Heart left ventricle (tissue), 16 donors: ENCODE measurements at regions of chr11 and their contacts with region 1.

Region 1: GRCh38 chr11:44434191-44434590 is 124.3 kb upstream of the ALX4 start:
- DNase-seq: no peak
- ATAC-seq: no peak
- H3K4me3 ChIP-seq: no peak overlapping the region
- H3K27ac ChIP-seq: no peak overlapping the region
- H3K4me1 ChIP-seq: peaks cover 0 to 19% (median 4%) of the 10 kb centered on the region in 12 donors
- H3K27me3 ChIP-seq: peaks cover 0 to 3% (median 0%) of the 10 kb centered on the region in 9 donors
- CTCF ChIP-seq: no peak
- POLR2A ChIP-seq: no peak

Region 2: DNA sequence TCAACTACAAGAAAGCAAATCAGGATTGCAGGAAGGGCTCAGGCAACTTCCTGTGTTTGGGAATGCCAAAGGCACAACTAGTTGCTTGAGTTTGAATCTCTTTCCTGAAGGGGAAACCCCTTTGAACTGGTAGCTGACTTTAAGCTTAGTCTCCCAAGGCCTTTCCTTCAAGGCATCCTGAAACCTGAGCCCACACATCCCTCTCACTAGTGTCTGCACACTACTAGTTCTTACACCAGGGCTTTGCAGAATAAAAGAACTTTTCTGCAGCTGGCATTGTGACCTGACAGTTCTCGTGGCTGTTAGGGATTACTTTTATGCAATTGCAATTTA is 243.4 kb before region 1 on chr11:
- intact Hi-C with region 1: no loop called
- DNase-seq: no peak
- ATAC-seq: no peak
- H3K4me3 ChIP-seq: no peak overlapping the region
- H3K27ac ChIP-seq: no peak overlapping the region
- H3K4me1 ChIP-seq: peaks cover 0 to 6% (median 0%) of the 10 kb centered on the region in 12 donors
- H3K27me3 ChIP-seq: no peaks in the 10 kb centered on the region
- CTCF ChIP-seq: no peak
- POLR2A ChIP-seq: no peak

Region 3: GRCh38 chr11:44379141-44380008 is 54.8 kb before region 1 on chr11:
- intact Hi-C with region 1: loop called in 1 of 10 experiments (anchors 10 kb)
- DNase-seq: peak in 1 of 5 donors; percentile 45
- ATAC-seq: peak in 3 of 4 donors; percentile 66 to 80 (median 71)
- H3K4me3 ChIP-seq: no peak overlapping the region
- H3K27ac ChIP-seq: no peak overlapping the region
- H3K4me1 ChIP-seq: peaks cover 0 to 3% (median 0%) of the 10 kb centered on the region in 12 donors
- H3K27me3 ChIP-seq: peaks cover 0 to 17% (median 0%) of the 10 kb centered on the region in 9 donors
- CTCF ChIP-seq: no peak
- POLR2A ChIP-seq: no peak

Region 4: DNA sequence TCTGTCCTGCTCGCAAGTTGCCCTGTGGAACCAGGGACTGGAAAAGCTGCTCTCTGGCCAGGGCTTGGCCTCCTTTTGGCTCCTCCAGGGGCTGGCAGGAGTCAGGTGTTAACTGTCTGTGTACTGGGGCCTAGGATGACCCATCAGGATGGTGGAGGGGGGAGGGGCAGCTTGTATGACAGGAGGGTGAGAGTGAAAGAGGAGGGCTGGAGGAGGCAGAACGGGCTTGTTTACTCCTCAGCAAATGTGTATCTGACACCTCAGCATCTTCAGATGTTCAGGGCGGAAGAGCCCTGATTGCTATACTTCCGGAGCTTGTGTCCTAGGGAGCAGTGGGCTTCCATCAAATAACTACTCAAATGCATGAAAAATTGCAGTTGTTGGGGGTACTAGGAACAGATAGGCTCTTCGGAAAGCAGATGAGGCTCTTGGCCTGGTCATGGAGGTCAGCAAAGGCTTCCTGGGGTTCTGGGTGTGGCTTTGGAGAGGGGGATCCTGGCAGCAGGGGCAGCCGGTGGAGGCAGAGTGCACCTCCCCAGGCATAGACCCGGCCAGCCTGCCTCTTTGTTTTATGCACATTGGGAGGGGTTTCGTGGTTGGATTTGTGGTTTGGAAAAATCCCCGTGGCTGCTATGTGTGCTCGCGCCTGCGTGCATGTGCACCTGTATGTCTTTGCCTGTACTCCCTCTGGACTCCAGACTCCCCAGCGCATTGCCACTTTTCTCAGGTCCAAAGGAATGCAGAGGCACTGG is 162.5 kb after region 1 on chr11:
- intact Hi-C with region 1: no loop called
- DNase-seq: no peak
- ATAC-seq: peak in 3 of 4 donors; percentile 2 to 12 (median 5)
- H3K4me3 ChIP-seq: no peak overlapping the region
- H3K27ac ChIP-seq: peak overlapping the region; percentile 17 to 79 (median 66)
- H3K4me1 ChIP-seq: peaks cover 0 to 68% (median 48%) of the 10 kb centered on the region in 12 donors
- H3K27me3 ChIP-seq: no peaks in the 10 kb centered on the region
- CTCF ChIP-seq: no peak
- POLR2A ChIP-seq: no peak